Right ventricle myocardium superior (tissue), 1 donor: ENCODE measurements at regions of chr3 and their contacts with region 1.

Region 1: GRCh38 chr3:101849051-101849720 is at the start of gene NFKBIZ:
- DNase-seq: peak; percentile 98
- ATAC-seq: peak; percentile 95
- total RNA-seq, gene NFKBIZ: 12.9 TPM

Region 2: GRCh38 chr3:101809178-101810021 is 39.8 kb before region 1 on chr3:
- intact Hi-C with region 1: loop called (anchors 5 kb)
- DNase-seq: no peak
- ATAC-seq: peak; percentile 47

Region 3: DNA sequence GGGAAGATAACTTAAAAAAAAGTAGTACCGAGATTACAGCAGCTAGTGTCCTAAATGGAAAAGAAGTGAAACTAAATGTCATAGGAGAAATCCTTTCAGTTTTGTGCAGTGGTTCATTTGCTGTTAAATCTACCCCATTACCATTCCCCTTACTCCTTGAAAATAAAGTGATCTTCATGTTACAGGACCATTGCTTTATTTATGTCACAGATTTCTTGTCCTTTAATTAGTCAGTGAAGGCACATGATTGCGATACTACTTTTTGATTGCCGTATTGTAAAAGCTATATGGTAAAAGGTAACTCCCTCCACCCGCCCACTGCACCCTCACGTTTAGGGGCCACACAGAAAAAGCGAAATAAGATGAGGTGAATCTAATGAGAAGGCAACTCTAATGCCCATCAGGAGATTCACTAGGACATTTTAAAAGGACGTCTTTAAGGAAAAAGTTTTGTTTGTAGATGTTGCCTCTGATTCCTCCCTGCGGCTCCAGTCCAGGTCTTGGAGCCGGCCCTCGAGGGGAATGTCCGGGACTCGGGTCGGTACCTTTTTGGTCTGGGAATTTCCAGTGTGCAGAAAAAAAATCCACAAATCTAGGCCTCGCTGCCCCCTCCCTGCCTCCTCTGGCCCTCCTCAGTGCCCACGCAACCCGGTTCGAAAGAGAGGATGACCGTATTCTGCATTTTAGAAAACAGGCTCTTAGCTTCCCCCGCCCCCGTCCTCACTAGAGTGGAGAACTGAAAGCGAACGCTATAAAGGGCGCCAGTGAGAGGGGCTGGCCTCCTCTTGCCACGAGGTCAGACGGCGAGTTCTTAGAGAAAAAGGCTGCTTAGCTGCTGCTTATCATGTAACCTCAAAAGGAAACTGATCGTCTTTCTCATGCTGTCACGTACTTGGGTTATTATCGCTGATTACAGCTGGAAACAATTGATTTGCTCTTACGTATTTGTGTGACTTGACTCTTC is 21.7 kb before region 1 on chr3:
- intact Hi-C with region 1: loop called (anchors 2 kb)
- DNase-seq: peak; percentile 78
- ATAC-seq: peak; percentile 84

Region 4: GRCh38 chr3:101995371-101996046 is 146.3 kb after region 1 on chr3:
- intact Hi-C with region 1: no loop called
- DNase-seq: no peak
- ATAC-seq: no peak